Left lung (tissue), 14 donors: ENCODE measurements at regions of chr10 and their contacts with region 1.

Region 1: DNA sequence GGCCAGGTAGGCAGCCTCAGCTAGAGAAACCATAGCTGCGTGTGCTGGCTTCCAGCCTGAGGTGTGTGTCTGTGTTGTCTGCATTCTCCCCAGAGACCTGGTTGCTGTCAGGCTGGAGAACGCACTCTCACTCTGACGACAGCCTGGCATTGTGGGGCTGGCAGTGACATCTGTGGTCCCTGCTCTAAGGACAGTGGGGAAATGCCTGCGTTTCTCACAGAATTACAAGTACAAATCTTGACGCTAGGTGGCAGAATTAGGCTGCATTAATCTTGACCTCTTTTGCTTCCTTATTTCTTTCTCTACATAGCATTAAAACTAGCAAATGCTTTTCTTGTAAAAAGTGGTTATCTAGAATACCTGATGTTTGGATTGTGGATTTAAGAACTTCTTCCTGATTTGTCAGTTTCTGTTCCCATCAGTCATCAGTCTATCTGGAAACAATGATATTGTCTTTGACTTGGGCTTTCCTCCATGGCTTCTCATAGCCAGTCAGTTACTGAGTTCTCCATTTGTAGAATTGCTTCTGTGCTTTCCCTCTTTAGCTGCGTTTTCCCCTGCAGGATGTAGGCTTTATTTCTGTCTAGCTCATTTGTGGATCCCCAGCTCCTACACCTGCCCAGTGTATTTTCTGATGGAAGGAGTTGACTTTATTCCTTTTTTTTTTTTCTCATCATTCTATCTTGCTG is 86.0 kb downstream of the FANK1 start:
- DNase-seq: peak in 2 of 4 donors; percentile 72 to 79
- ATAC-seq: peak; percentile 91
- H3K4me3 ChIP-seq: no peak overlapping the region
- H3K27ac ChIP-seq: no peak overlapping the region
- H3K4me1 ChIP-seq: no peaks in the 10 kb centered on the region
- H3K27me3 ChIP-seq: no peaks in the 10 kb centered on the region
- CTCF ChIP-seq: peak; percentile 50 to 73

Region 2: DNA sequence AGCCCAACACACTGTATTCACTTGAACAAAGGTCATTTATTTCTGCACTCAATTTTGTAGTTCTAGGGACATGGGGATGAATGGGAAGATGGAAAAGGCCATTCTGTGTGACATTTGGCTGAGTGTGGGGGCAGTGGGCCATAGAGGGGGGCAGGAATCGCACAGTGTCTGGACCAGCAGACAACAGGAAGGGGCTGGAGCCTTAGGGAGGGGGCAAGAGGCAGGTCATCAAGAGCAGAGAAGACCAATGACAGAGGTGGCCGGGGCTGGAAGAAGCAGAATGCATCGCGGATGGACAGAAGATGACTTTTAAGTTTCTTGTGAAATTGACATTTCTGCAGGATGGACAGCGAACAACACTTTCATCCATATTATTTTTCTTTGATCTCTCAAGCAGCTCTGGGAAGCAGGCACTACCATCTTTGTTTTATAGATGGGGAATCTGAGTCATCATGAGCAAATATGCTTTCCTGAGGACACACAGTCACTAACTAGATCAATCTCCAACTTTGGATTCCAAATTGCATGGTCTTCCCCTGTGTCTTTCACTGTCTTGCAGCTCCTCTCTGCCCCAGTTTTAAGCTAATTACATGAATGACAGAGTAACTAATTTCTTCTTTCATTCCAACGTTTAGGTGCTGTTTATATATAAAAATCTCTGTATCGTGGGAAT is 204.2 kb after region 1 on chr10:
- intact Hi-C with region 1: no loop called
- DNase-seq: no peak
- ATAC-seq: no peak
- H3K4me3 ChIP-seq: no peak overlapping the region
- H3K27ac ChIP-seq: no peak overlapping the region
- H3K4me1 ChIP-seq: no peaks in the 10 kb centered on the region
- H3K27me3 ChIP-seq: no peaks in the 10 kb centered on the region
- CTCF ChIP-seq: no peak

Region 3: GRCh38 chr10:126387023-126387921 is 404.9 kb after region 1 on chr10:
- intact Hi-C with region 1: loop called in 1 of 2 experiments (anchors 10 kb)
- DNase-seq: peak; percentile 54 to 84 (median 74)
- ATAC-seq: peak; percentile 85
- H3K4me3 ChIP-seq: peak overlapping the region; percentile 27 to 29
- H3K27ac ChIP-seq: peak overlapping the region in 1 of 2 donors; percentile 39
- H3K4me1 ChIP-seq: peaks cover 0 to 10% of the 10 kb centered on the region in 2 donors
- H3K27me3 ChIP-seq: peaks cover 15 to 58% of the 10 kb centered on the region in 2 donors
- CTCF ChIP-seq: peak; percentile 52 to 63

Region 4: DNA sequence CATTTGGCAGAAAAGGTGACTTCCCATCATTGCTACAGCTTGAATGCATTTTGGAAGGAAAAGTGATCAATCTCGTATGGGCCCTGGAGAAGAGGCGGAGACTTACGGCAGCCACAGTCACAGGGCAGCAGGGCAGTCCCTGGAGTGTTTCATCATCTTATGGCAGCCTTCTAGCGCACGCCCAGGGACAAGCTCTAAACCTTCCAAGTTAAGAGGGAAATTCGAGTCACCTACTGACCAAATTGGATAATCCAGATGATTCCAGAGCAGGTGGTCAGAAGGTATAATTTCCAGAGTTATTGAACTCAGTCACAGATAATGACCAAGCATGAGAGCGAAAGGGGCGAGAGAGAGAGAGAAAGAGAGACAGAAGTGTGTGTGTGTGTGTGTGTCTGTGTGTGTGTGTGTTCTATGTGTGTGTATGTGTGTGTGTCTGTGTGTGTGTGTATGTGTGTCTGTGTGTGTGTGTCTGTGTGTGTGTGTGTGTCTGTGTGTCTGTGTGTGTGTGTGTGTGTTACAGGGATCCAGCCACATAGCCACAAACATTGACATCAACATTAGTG is 529.6 kb after region 1 on chr10:
- intact Hi-C with region 1: loop called in 1 of 2 experiments (anchors 5 kb)
- DNase-seq: no peak
- ATAC-seq: no peak
- H3K4me3 ChIP-seq: no peak overlapping the region
- H3K27ac ChIP-seq: no peak overlapping the region
- H3K4me1 ChIP-seq: no peaks in the 10 kb centered on the region
- H3K27me3 ChIP-seq: no peaks in the 10 kb centered on the region
- CTCF ChIP-seq: no peak